Endothelial cell of umbilical vein (primary cell): ENCODE measurements at regions of chr4 and their contacts with region 1.

Region 1: DNA sequence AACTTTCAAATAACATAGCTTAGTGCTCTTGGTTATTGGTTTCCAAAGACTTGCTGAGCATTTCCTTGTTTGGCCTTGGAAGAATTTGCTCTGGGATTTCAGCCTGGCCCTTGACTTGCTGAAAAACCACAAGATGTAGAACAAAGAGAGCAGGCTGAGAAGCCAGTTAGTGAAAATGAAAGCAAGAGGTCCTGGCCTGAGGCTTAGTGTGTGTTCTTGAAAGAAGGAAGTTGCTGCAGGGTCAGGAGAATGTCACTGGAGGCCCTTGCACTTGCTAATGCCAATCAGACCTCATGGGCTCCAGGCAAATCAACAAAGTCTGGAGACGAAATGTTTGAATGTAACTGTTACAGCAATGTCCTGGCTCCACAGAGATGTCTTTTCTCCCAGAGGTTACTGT is 79.4 kb downstream of the SYNPO2 start:
- DNase-seq: peak; percentile 38
- H3K4me3 ChIP-seq: no peak overlapping the region
- H3K27ac ChIP-seq: no peak overlapping the region
- H3K4me1 ChIP-seq: no peaks in the 10 kb centered on the region
- H3K27me3 ChIP-seq: no peaks in the 10 kb centered on the region
- CTCF ChIP-seq: no peak
- POLR2A ChIP-seq: no peak

Region 2: GRCh38 chr4:118740869-118741268 is 227.1 kb before region 1 on chr4:
- CTCF ChIA-PET with region 1: interaction called, 10 read pairs
- POLR2A ChIA-PET with region 1: no interaction called
- dilution Hi-C with region 1: no loop called
- intact Hi-C with region 1: loop called (anchors 1 kb)
- DNase-seq: no peak
- H3K4me3 ChIP-seq: no peak overlapping the region
- H3K27ac ChIP-seq: no peak overlapping the region
- H3K4me1 ChIP-seq: peaks cover 2% of the 10 kb centered on the region
- H3K27me3 ChIP-seq: no peaks in the 10 kb centered on the region
- CTCF ChIP-seq: peak in 1 of 2 donors; percentile 3
- POLR2A ChIP-seq: no peak

Region 3: DNA sequence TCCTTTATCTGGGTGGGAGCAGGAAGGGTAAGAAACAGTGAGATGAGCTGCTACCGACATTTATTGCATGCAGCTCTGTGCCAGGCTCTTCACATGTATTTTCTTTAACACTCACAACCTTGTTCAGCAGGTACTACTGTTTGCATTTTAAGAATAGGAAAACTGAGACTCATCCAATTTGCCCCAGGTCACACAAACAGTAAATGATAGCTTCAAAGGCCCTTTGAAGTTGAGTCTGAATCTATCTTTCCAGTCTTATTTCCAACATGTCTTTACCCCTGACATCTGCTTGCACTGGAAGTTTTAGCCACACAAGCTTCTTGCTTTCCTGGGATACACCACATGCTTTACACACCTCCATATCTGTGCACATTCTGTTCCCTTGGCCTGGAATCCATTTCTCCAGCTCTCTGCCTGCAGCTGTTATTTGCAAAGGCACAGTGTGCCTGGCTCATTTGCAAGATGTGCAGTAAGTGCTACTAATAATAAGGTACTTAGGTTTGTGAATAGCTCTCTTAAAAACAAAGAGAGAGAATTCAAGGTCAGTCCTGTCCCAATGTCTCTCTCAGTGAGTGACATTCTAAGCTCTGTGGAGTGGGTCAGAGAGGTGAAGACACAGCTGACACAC is 221.6 kb before region 1 on chr4:
- CTCF ChIA-PET with region 1: interaction called, 10 read pairs
- POLR2A ChIA-PET with region 1: no interaction called
- dilution Hi-C with region 1: no loop called
- intact Hi-C with region 1: loop called (anchors 1 kb)
- DNase-seq: no peak
- H3K4me3 ChIP-seq: no peak overlapping the region
- H3K27ac ChIP-seq: no peak overlapping the region
- H3K4me1 ChIP-seq: peaks cover 5% of the 10 kb centered on the region
- H3K27me3 ChIP-seq: no peaks in the 10 kb centered on the region
- CTCF ChIP-seq: no peak
- POLR2A ChIP-seq: no peak